Psoas muscle (tissue), 8 donors: ENCODE measurements at regions of chr9 and their contacts with region 1.

Region 1: GRCh38 chr9:7439355-7439995 is 360.1 kb downstream of the DMAC1 start:
- DNase-seq: no peak
- ATAC-seq: no peak
- H3K4me3 ChIP-seq: no peak overlapping the region
- H3K27ac ChIP-seq: no peak overlapping the region
- H3K4me1 ChIP-seq: no peaks in the 10 kb centered on the region
- H3K27me3 ChIP-seq: no peaks in the 10 kb centered on the region
- CTCF ChIP-seq: no peak

Region 2: GRCh38 chr9:7516376-7516775 is 76.9 kb after region 1 on chr9:
- intact Hi-C with region 1: loop called in 1 of 2 experiments (anchors 5 kb)
- DNase-seq: no peak
- ATAC-seq: no peak
- H3K4me3 ChIP-seq: no peak overlapping the region
- H3K27ac ChIP-seq: no peak overlapping the region
- H3K4me1 ChIP-seq: no peaks in the 10 kb centered on the region
- H3K27me3 ChIP-seq: no peaks in the 10 kb centered on the region
- CTCF ChIP-seq: no peak

Region 3: GRCh38 chr9:7560669-7561305 is 121.3 kb after region 1 on chr9:
- intact Hi-C with region 1: no loop called
- DNase-seq: no peak
- ATAC-seq: no peak
- H3K4me3 ChIP-seq: no peak overlapping the region
- H3K27ac ChIP-seq: no peak overlapping the region
- H3K4me1 ChIP-seq: no peaks in the 10 kb centered on the region
- H3K27me3 ChIP-seq: no peaks in the 10 kb centered on the region
- CTCF ChIP-seq: no peak